ENCODE measurements at regions of chrX and their contacts with region 1.

Region 1: GRCh38 chrX:103711533-103712369 is 1.0 kb downstream of the TMEM31 start:
- DNase-seq: peak; percentile 72
- ATAC-seq: peak; percentile 90
- H3K4me3 Mint-ChIP-seq: no peak overlapping the region
- H3K27ac Mint-ChIP-seq: peak overlapping the region; percentile 42; the same call in 1 of the 2 replicates
- H3K4me1 Mint-ChIP-seq: peaks cover 8% of the 10 kb centered on the region
- H3K27me3 Mint-ChIP-seq: 0 out of 2 replicates have a peak, but pooled peaks cover 8% of the 10 kb centered on the region
- CTCF ChIP-seq: peak; percentile 67

Region 2: DNA sequence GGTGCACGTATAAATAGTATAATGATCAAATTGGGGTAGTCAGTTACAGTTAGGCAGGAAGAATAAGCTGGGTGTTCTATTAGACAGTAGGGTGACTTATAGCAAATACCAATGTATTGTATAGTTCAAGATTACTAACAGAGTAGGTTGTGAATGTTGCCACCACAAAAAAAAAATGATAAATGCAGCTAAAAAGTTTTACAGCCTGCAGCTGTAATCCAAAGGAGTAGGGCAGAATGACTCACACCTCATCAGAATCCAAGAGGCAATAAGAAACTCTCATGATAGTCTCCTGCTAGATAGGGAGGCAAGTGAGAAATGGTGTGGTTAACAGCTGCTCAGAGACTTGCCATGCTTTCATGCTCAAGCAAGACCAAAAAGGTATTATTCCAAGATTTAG is 146.0 kb before region 1 on chrX:
- CTCF ChIA-PET with region 1: no interaction called
- POLR2A ChIA-PET with region 1: no interaction called
- DNase-seq: no peak
- ATAC-seq: no peak
- H3K4me3 Mint-ChIP-seq: no peak overlapping the region
- H3K27ac Mint-ChIP-seq: no peak overlapping the region
- H3K4me1 Mint-ChIP-seq: no peaks in the 10 kb centered on the region
- H3K27me3 Mint-ChIP-seq: peaks cover 20% of the 10 kb centered on the region
- CTCF ChIP-seq: no peak

Region 3: GRCh38 chrX:103730796-103731493 is 19.2 kb after region 1 on chrX:
- CTCF ChIA-PET with region 1: interaction called, 25 read pairs
- POLR2A ChIA-PET with region 1: interaction called, 3 read pairs
- DNase-seq: no peak
- ATAC-seq: peak; percentile 41; the same call in 1 of the 2 replicates
- H3K4me3 Mint-ChIP-seq: no peak overlapping the region
- H3K27ac Mint-ChIP-seq: peak overlapping the region; percentile 74
- H3K4me1 Mint-ChIP-seq: peaks cover 60% of the 10 kb centered on the region
- H3K27me3 Mint-ChIP-seq: peaks cover 12% of the 10 kb centered on the region
- CTCF ChIP-seq: no peak

Region 4: DNA sequence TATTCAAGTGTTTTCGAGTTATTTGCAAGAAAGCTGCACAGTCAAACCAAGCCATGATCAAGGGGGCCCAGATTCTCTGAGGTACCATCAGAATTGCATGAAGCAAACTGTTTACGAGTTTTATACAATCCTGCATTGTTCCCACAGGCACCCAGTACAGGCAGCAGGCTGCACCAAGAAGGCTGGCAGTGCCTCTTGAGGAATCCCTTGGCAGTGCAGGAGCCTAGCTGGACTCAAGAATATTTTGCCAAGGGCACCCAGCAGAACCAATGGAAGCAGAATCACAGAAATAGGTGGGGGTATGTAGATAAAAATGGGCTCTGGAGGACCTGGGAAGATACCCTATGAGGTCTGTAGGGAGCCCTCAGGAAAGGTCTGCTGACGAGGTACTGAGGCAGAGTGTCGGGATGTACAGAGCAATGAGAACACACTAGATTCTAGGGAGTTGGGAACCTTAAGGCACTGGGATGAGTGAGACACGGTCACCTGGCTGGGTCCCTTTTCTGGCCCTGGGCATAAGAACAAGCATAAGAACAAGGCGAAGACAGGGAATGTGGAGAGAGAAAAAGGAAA is 62.4 kb after region 1 on chrX:
- CTCF ChIA-PET with region 1: interaction called, 10 read pairs
- POLR2A ChIA-PET with region 1: no interaction called
- DNase-seq: no peak
- ATAC-seq: peak; percentile 53; the same call in 1 of the 2 replicates
- H3K4me3 Mint-ChIP-seq: no peak overlapping the region
- H3K27ac Mint-ChIP-seq: peak overlapping the region; percentile 6; the same call in 1 of the 2 replicates
- H3K4me1 Mint-ChIP-seq: peaks cover 49% of the 10 kb centered on the region
- H3K27me3 Mint-ChIP-seq: no peaks in the 10 kb centered on the region; the same call in 1 of the 2 replicates
- CTCF ChIP-seq: no peak

Measured in WTC11 (cell line).